A549 (cell line): ENCODE measurements at regions of chr2 and their contacts with region 1.

Region 1: GRCh38 chr2:172084734-172085459 is 410 bp upstream of the DLX1 start:
- DNase-seq: peak; percentile 79 to 93
- ATAC-seq: peak; percentile 91 to 97
- H3K4me3 ChIP-seq: peak overlapping the region; percentile 79
- H3K27ac ChIP-seq: peak overlapping the region; percentile 79 to 90
- H3K4me1 ChIP-seq: no peaks in the 10 kb centered on the region
- CTCF ChIP-seq: no peak
- EP300 ChIP-seq: no peak
- POLR2A ChIP-seq: peak; percentile 77
- RAD21 ChIP-seq: peak in 1 of 2 experiments; percentile 9; a peak in 1 of 5 replicates

Region 2: DNA sequence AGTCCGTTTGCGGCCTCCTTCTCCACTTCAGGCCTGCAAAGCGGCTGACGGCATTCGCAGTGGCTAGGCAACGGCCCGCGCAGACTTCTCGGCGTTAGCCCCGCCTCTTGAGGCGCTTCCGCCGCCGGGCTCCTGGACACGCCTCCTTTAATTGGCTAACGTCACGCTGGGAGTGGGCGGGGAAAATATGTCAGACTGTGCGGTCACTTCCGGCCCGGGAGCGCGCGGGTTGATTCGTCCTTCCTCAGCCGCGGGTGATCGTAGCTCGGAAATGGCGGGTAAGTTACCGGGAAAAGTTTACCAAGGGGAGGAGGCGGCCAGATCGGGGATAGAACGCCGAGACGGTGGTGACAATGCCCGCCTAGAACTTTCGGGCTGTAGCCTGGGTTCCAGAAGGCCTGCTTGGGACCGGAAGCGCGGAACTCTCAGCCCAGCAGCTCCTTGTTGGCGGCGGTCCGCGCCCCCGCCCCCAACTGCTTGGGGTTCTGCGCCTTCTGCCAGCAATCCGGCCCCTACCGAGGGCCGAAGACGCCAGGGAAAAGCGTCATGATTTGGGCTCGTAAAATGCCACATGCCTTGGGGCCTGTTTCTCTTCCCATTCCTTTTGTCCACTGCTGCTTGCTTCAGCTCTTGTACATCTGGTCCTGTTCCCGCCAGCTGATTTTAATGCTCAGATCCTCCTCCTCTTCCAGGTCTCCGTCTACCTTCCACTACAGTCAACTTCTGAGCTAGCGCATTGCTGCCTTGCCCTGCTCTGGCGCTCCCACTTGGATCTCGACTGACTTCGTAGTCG is 162.5 kb before region 1 on chr2 and contains the start of gene HAT1:
- CTCF ChIA-PET with region 1: no interaction called
- POLR2A ChIA-PET with region 1: interaction called, 10 read pairs
- DNase-seq: peak; percentile 89 to 98
- ATAC-seq: peak; percentile 95 to 97
- H3K4me3 ChIP-seq: peak within 1 kb of the TSS; percentile 49
- H3K27ac ChIP-seq: peak within 1 kb of the TSS; percentile 76 to 85
- H3K4me1 ChIP-seq: peaks cover 21% of the 10 kb centered on the region
- CTCF ChIP-seq: no peak
- EP300 ChIP-seq: no peak
- POLR2A ChIP-seq: peak; percentile 70
- RAD21 ChIP-seq: no peak
- polyA plus RNA-seq, gene HAT1: 99.1 and 139 TPM in 2 replicates

Region 3: DNA sequence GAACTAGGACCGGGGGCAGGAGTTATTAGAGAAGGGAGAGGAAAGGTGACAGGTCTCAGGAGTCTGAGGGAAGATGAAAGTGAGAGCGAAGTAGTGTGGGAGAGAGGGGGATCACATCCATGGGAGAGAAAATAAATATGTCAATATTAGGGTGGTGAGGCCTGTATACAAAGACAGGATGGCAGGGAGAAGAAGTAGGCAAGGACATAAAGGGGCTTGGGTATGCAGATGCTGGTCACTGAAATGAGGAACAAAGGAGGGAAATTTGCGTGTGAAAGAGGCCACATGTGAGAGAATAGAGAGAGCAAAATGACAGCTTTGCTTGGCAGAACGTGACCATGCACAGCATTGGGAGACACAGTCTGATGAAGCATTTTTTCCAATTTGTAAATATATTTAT is 71.5 kb before region 1 on chr2:
- CTCF ChIA-PET with region 1: no interaction called
- POLR2A ChIA-PET with region 1: no interaction called
- DNase-seq: no peak
- ATAC-seq: no peak
- H3K4me3 ChIP-seq: no peak overlapping the region
- H3K27ac ChIP-seq: no peak overlapping the region
- H3K4me1 ChIP-seq: peaks cover 9% of the 10 kb centered on the region; the same call in 2 of the 3 replicates
- CTCF ChIP-seq: no peak
- EP300 ChIP-seq: no peak
- POLR2A ChIP-seq: no peak
- RAD21 ChIP-seq: no peak

Region 4: DNA sequence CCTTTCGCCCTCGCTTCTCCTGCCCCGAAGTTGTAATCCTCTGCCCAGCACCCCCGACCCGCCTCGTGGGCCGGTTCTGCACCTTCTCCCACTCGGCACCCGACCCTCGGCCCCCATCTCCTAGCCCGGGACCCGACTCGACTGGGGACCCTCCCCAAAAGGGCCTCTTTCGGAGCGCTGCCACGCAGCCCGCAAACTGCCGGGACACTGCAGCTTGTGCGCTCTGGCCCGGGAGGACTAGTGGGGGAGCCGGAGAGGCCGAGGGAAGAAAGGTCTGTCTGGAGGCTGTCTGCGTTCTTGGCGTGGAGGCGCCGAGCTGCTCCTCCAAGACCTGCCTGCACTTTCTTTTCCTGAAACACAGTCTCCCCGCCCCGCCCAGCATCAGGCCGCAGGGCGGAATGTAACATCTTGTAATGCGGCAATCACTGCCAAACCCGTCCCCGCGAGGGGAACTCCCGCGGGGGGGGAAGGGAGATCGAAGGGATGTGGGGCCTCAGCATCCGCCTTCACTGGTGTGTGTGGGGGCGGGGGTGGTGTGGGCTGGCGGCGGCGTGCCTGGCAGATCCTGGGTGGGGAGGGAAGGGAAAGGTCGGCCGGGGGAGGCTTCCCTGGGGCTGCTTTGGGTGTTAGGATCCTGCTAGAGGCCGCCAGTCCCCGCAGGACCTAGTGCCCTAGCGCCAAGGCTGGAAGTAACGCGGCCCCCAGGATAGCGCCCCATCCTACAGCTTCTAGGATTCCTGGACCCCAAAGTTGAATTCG is 10.4 kb after region 1 on chr2:
- CTCF ChIA-PET with region 1: interaction called, 5 read pairs
- POLR2A ChIA-PET with region 1: interaction called, 32 read pairs
- DNase-seq: peak; percentile 62 to 74
- ATAC-seq: peak; percentile 44 to 77
- H3K4me3 ChIP-seq: peak overlapping the region; percentile 71
- H3K27ac ChIP-seq: peak overlapping the region; percentile 88 to 98
- H3K4me1 ChIP-seq: peaks cover 30% of the 10 kb centered on the region
- CTCF ChIP-seq: no peak
- EP300 ChIP-seq: no peak
- POLR2A ChIP-seq: peak; percentile 46
- RAD21 ChIP-seq: no peak